OCI-LY7 (cell line): ENCODE measurements at regions of chr9 and their contacts with region 1.

Region 1: DNA sequence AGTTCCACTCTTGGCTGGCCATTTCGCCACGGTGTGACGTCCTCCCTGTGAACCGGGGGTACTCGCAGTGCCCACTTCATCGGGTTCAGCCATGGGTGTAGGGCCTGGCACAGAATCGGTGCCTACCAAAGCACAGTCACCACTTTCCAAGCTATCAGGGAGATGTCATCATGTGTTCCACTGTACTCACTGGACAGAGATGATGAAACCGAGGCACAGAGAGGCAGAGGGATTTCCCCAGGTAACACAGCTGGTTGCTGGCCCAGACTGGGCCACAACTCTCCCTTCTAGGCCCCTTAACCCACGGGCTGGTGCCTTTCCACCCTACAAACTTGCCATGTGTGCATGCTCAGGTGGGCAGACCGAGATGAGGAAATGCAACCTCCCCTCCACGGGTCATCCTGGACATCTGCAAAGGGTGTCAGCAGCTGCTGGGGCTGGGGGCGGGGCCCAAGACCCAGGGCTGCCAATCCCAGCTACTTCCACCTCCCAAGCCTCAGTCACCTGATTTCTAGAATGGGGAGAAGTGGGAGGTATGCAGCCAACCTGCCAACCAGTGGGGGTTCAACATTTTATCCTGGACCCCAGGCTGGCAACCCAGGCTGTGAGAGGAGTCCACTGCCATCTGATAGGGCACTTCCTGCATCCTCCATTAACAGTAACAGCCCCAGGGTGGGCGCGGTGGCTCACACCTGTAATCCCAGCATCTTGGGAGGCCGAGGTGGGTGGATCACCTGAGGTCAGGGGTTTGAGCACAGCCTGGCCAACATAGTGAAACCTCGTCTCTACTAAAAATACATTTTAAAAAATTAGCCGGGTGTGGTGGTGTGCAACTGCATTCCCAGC is 893 bp upstream of the SH2D3C start:
- DNase-seq: peak; percentile 94
- H3K4me3 ChIP-seq: peak overlapping the region; percentile 88
- H3K27ac ChIP-seq: peak overlapping the region; percentile 95
- H3K4me1 ChIP-seq: peaks cover 72% of the 10 kb centered on the region
- CTCF ChIP-seq: no peak

Region 2: DNA sequence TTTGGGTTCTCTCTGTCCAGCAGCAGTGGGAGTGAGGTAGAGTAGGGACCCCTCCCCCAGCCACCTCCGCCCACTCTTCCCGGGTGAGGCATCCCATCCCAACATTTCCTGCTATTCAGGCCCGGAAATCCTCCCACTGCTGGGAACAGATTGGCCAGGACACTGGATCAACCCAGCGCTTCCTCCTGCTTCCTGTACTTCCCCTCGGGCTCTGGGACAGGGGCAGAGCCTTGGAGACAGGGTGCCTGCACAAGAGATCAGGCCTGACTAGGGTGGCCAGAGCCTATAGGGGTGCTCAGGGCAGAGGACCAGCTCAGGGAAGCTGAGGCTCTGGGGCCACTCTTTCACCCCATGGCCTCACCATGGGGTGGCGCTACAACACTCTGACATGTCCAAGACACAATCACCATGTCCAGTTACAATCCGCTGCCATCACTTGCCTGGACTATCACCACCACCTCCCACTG is 15.4 kb before region 1 on chr9:
- CTCF ChIA-PET with region 1: interaction called, 3 read pairs
- POLR2A ChIA-PET with region 1: interaction called, 8 read pairs
- intact Hi-C with region 1: loop called (anchors 1 kb)
- DNase-seq: peak; percentile 51
- H3K4me3 ChIP-seq: no peak overlapping the region
- H3K27ac ChIP-seq: no peak overlapping the region
- H3K4me1 ChIP-seq: peaks cover 14% of the 10 kb centered on the region
- CTCF ChIP-seq: peak; percentile 67

Region 3: DNA sequence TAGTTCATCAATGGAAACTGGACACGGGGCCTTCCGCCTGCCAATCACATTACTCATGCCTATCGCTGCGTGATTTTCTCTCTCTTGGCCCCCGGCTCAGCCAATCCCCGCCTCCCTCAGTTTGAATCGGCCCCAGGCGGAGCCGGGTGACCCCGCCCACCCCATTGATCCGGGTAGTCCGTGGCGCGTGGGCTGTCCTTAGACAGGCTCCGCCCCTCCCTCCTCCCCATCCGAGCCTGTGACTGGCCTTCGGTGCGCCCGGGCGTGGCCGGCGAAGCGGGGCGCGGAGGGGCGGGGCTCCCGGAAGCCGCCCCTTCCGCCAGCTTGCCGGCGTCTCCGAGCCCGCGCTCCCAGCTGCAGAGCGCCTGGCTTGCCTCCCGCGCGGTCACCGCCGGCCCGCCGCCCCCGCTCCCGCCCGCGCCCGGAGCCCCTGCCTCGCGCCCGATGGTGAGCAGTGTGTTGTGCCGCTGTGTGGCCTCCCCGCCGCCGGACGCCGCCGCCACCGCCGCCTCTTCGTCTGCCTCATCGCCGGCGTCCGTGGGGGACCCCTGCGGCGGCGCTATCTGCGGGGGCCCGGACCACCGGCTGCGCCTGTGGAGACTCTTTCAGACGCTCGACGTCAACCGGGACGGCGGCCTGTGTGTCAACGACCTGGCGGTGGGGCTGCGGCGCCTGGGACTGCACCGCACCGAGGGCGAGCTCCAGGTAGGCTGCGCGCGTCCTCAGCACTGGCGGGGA is 288.7 kb after region 1 on chr9 and contains the start of gene SLC25A25:
- CTCF ChIA-PET with region 1: no interaction called
- POLR2A ChIA-PET with region 1: no interaction called
- intact Hi-C with region 1: loop called (anchors 5 kb)
- DNase-seq: peak; percentile 99
- H3K4me3 ChIP-seq: peak within 1 kb of the TSS; percentile 87
- H3K27ac ChIP-seq: peak within 1 kb of the TSS; percentile 92
- H3K4me1 ChIP-seq: peaks cover 51% of the 10 kb centered on the region
- CTCF ChIP-seq: no peak
- total RNA-seq, gene SLC25A25: 21.4 and 23.7 TPM in 2 replicates